A549 (cell line): ENCODE measurements at regions of chr1 and their contacts with region 1.

Region 1: DNA sequence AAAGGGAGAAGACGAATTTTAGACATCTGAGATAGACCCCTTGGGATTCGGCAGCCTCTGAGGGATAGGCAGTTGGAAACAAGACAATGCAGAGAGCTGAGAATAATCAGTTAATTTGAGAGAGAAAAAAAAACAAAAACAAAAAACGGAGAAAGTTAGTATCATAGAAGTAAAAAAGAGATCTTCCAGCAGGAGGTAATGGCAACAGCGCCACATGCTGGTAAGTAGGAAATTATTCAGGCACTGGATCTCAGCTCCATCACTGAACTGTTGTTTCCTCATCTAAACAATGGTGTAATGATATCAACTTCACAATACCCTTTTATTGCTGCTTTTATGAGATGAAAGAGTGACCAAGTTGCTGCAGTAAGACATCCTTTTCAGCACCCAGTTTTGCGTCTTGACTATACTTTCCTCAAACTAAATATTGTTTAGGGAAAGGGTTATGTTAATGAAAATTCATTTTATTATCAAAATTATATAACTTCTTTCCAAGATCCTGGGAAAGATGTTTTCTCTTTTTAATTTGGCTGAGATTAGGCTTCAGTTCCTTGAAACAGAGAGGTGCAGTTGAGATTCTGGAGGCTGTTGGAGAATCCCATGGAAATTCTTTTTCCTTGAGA is 91.4 kb upstream of the KCNA3 start:
- DNase-seq: peak; percentile 16 to 38
- ATAC-seq: peak in 1 of 2 experiments; percentile 60; a peak in 2 of 6 replicates
- H3K4me3 ChIP-seq: no peak overlapping the region
- H3K27ac ChIP-seq: no peak overlapping the region
- H3K4me1 ChIP-seq: no peaks in the 10 kb centered on the region
- CTCF ChIP-seq: peak; percentile 66
- EP300 ChIP-seq: no peak
- POLR2A ChIP-seq: no peak
- RAD21 ChIP-seq: peak; percentile 51 to 73; a peak in 3 of 5 replicates

Region 2: DNA sequence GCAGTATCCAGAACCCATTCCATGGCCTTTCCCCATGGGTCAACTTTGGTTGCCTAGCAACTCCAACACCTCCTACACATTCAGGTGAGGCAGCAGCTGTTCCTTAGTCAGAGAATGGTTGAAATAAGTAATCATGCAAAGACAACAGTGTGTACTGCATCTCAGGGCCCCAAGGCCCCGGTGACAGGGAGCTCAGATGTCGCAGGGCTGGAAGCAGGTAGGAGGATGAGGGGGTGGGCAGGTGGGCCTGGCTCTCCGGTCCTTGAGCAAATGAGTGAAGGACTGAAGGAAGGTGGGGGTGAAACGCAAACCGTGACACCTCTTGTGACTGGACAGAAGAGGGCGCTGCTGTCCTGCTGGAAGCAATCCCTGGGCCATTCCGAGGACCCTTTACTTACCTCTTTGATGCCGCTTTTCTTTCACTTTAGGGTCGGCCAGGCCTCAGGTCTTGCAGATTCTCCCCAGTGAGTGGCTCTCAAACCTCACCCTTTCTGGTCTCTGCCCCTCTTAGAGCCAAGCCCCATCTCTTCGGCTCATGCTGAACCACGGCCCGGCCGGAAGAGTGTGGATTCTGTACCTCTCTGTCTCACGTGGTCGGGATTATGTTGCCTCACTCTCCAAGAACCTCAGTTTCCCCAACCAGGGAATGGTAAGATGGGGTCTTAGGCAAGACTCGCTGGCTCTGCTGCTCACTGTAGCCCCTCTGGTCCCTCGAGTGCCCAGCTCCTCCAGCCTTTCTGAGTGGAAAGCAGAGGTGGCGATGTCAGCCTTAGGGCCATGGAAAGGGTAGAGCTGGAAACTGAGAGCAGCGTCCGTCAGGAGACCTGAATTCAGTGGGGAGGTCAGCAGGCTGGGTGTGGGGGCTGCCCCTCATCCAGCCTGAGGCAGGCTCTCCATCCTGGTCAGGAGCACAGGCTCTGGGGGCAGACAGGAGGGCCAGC is 241.6 kb before region 1 on chr1:
- CTCF ChIA-PET with region 1: interaction called, 13 read pairs
- POLR2A ChIA-PET with region 1: no interaction called
- DNase-seq: peak; percentile 29 to 49
- ATAC-seq: peak in 1 of 2 experiments; percentile 89; a peak in 3 of 6 replicates
- H3K4me3 ChIP-seq: no peak overlapping the region
- H3K27ac ChIP-seq: no peak overlapping the region
- H3K4me1 ChIP-seq: peaks cover 16% of the 10 kb centered on the region
- CTCF ChIP-seq: peak; percentile 58
- EP300 ChIP-seq: no peak
- POLR2A ChIP-seq: no peak
- RAD21 ChIP-seq: peak; percentile 65 to 74

Region 3: DNA sequence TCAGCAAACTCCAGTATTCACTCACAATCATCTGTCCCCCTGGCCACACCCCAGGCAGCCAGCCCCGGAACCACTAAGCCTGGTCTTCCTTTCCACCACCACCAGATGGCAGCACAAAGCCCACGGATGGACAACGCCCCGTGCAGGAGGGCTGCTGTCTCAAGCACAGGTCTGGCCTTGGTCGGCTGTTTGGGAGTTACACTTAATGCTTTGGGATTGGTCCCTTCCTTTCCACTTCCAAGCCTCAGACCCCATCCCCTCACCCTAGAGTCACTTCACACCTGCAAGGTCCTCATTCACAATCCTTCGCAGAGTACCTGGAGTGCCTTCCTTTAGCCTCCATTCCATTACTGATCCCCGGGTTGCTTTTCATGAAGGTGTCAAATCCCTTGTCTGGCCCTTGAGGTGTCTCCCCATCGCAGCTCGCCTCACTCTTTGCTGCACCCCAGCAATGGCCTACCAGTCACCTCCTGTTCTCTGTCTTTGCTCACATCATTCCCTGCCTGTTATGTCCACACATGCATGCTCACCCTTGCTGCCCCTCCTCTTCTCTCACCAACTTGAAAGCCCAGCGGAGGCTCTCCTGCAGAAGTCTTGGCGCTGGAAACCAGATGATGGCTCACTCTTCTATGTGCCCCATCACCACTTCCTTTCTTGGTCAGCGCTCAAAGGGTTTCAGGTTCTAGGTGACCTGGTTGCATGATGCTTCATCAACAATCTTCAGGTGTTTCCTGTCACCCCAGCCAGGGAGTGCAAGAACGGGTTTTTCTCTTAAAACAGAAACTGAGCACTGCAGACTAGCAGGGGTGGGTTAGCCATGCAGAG is 135.1 kb before region 1 on chr1:
- CTCF ChIA-PET with region 1: interaction called, 33 read pairs
- POLR2A ChIA-PET with region 1: no interaction called
- DNase-seq: peak; percentile 53 to 58
- ATAC-seq: peak; percentile 93 to 99
- H3K4me3 ChIP-seq: no peak overlapping the region
- H3K27ac ChIP-seq: no peak overlapping the region
- H3K4me1 ChIP-seq: no peaks in the 10 kb centered on the region
- CTCF ChIP-seq: peak; percentile 58
- EP300 ChIP-seq: no peak
- POLR2A ChIP-seq: no peak
- RAD21 ChIP-seq: peak; percentile 52 to 59

Region 4: GRCh38 chr1:110638058-110638457 is 128.1 kb before region 1 on chr1:
- CTCF ChIA-PET with region 1: interaction called, 12 read pairs
- POLR2A ChIA-PET with region 1: no interaction called
- DNase-seq: no peak
- ATAC-seq: no peak
- H3K4me3 ChIP-seq: no peak overlapping the region
- H3K27ac ChIP-seq: no peak overlapping the region
- H3K4me1 ChIP-seq: no peaks in the 10 kb centered on the region
- CTCF ChIP-seq: no peak
- EP300 ChIP-seq: no peak
- POLR2A ChIP-seq: no peak
- RAD21 ChIP-seq: no peak

Region 5: GRCh38 chr1:110780600-110781484 is 14.7 kb after region 1 on chr1:
- CTCF ChIA-PET with region 1: interaction called, 59 read pairs
- POLR2A ChIA-PET with region 1: no interaction called
- DNase-seq: peak; percentile 40 to 71
- ATAC-seq: peak; percentile 74 to 80; a peak in 4 of 6 replicates
- H3K4me3 ChIP-seq: no peak overlapping the region
- H3K27ac ChIP-seq: no peak overlapping the region
- H3K4me1 ChIP-seq: no peaks in the 10 kb centered on the region
- CTCF ChIP-seq: peak; percentile 57
- EP300 ChIP-seq: no peak
- POLR2A ChIP-seq: no peak
- RAD21 ChIP-seq: peak; percentile 51 to 53